Caco-2 (cell line): ENCODE measurements at regions of chr1 and their contacts with region 1.

Region 1: GRCh38 chr1:87805666-87806378 is 477.1 kb downstream of the LMO4 start:
- DNase-seq: peak; percentile 62 to 76
- H3K4me3 ChIP-seq: peak overlapping the region; percentile 34
- H3K4me3 Mint-ChIP-seq: peak overlapping the region; percentile 78
- H3K27ac Mint-ChIP-seq: peak overlapping the region; percentile 95
- H3K4me1 ChIP-seq: peaks cover 38% of the 10 kb centered on the region
- H3K4me1 Mint-ChIP-seq: peaks cover 9% of the 10 kb centered on the region
- H3K27me3 ChIP-seq: no peaks in the 10 kb centered on the region
- H3K27me3 Mint-ChIP-seq: no peaks in the 10 kb centered on the region
- CTCF ChIP-seq: no peak

Region 2: DNA sequence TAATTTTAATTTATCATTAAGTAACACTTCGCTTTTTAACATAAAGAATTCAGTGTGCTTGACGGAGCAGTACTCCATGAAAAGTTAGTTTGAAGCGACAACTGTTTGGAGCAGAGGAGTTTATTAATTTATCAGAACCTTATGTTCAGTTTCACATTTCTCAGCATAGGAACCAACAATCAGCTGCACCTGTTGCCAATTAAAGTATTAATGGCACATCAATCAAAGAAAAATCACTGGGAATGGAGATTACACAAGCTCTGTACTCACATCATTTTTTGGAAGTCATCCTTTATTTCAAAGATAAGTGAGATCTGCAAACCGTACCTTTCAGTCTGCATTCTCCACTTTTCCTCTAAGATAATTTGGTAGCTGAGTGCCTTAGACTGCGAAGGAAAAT is 132.5 kb before region 1 on chr1:
- CTCF ChIA-PET with region 1: no interaction called
- POLR2A ChIA-PET with region 1: no interaction called
- intact Hi-C with region 1: no loop called
- DNase-seq: no peak
- H3K4me3 ChIP-seq: no peak overlapping the region
- H3K4me3 Mint-ChIP-seq: no peak overlapping the region
- H3K27ac Mint-ChIP-seq: no peak overlapping the region
- H3K4me1 ChIP-seq: no peaks in the 10 kb centered on the region
- H3K4me1 Mint-ChIP-seq: no peaks in the 10 kb centered on the region
- H3K27me3 ChIP-seq: no peaks in the 10 kb centered on the region
- H3K27me3 Mint-ChIP-seq: no peaks in the 10 kb centered on the region
- CTCF ChIP-seq: no peak

Region 3: GRCh38 chr1:87718241-87718950 is 87.4 kb before region 1 on chr1:
- CTCF ChIA-PET with region 1: no interaction called
- POLR2A ChIA-PET with region 1: no interaction called
- intact Hi-C with region 1: loop called (anchors 2 kb)
- DNase-seq: peak; percentile 4 to 46
- H3K4me3 ChIP-seq: no peak overlapping the region
- H3K4me3 Mint-ChIP-seq: no peak overlapping the region
- H3K27ac Mint-ChIP-seq: peak overlapping the region; percentile 67
- H3K4me1 ChIP-seq: peaks cover 23% of the 10 kb centered on the region
- H3K4me1 Mint-ChIP-seq: peaks cover 27% of the 10 kb centered on the region
- H3K27me3 ChIP-seq: no peaks in the 10 kb centered on the region
- H3K27me3 Mint-ChIP-seq: no peaks in the 10 kb centered on the region
- CTCF ChIP-seq: no peak

Region 4: GRCh38 chr1:87757676-87758075 is 48.1 kb before region 1 on chr1:
- CTCF ChIA-PET with region 1: no interaction called
- POLR2A ChIA-PET with region 1: no interaction called
- intact Hi-C with region 1: no loop called
- DNase-seq: no peak
- H3K4me3 ChIP-seq: no peak overlapping the region
- H3K4me3 Mint-ChIP-seq: no peak overlapping the region
- H3K27ac Mint-ChIP-seq: no peak overlapping the region
- H3K4me1 ChIP-seq: no peaks in the 10 kb centered on the region
- H3K4me1 Mint-ChIP-seq: peaks cover 13% of the 10 kb centered on the region
- H3K27me3 ChIP-seq: no peaks in the 10 kb centered on the region
- H3K27me3 Mint-ChIP-seq: no peaks in the 10 kb centered on the region
- CTCF ChIP-seq: no peak

Region 5: DNA sequence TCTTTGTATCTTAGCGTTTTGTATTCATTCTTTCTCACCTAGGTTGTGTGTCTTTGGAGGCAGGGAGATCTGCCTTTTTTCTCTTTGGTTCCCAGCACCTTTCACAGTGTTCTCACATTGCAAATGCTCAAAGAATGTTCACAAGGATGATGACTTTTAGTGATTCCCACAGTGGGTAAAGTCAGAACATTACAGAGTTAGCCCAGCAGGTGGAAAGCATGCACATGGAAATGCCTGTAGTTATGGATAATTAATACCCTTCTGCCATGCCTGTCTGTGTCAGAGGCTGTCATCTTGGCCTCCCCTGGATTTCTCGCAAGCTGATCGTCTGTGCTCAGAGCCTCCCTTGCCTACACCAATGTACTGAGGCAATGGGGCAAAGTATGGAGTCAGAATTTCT is 18.3 kb before region 1 on chr1:
- CTCF ChIA-PET with region 1: no interaction called
- POLR2A ChIA-PET with region 1: no interaction called
- intact Hi-C with region 1: loop called (anchors 1 kb)
- DNase-seq: peak; percentile 60 to 66
- H3K4me3 ChIP-seq: no peak overlapping the region
- H3K4me3 Mint-ChIP-seq: peak overlapping the region; percentile 58
- H3K27ac Mint-ChIP-seq: peak overlapping the region; percentile 85
- H3K4me1 ChIP-seq: peaks cover 60% of the 10 kb centered on the region
- H3K4me1 Mint-ChIP-seq: peaks cover 47% of the 10 kb centered on the region
- H3K27me3 ChIP-seq: no peaks in the 10 kb centered on the region
- H3K27me3 Mint-ChIP-seq: no peaks in the 10 kb centered on the region
- CTCF ChIP-seq: peak in 1 of 2 experiments; percentile 15

Region 6: GRCh38 chr1:87794788-87795614 is 10.8 kb before region 1 on chr1:
- CTCF ChIA-PET with region 1: interaction called, 4 read pairs
- POLR2A ChIA-PET with region 1: interaction called, 4 read pairs
- intact Hi-C with region 1: loop called (anchors 1 kb)
- DNase-seq: peak; percentile 22 to 35
- H3K4me3 ChIP-seq: no peak overlapping the region
- H3K4me3 Mint-ChIP-seq: no peak overlapping the region
- H3K27ac Mint-ChIP-seq: peak overlapping the region; percentile 77
- H3K4me1 ChIP-seq: peaks cover 76% of the 10 kb centered on the region
- H3K4me1 Mint-ChIP-seq: peaks cover 51% of the 10 kb centered on the region
- H3K27me3 ChIP-seq: no peaks in the 10 kb centered on the region
- H3K27me3 Mint-ChIP-seq: no peaks in the 10 kb centered on the region
- CTCF ChIP-seq: no peak

Region 7: GRCh38 chr1:87888446-87888845 is 82.6 kb after region 1 on chr1:
- CTCF ChIA-PET with region 1: no interaction called
- POLR2A ChIA-PET with region 1: no interaction called
- intact Hi-C with region 1: loop called (anchors 1 kb)
- DNase-seq: peak in 1 of 2 experiments; percentile 47
- H3K4me3 ChIP-seq: no peak overlapping the region
- H3K4me3 Mint-ChIP-seq: no peak overlapping the region
- H3K27ac Mint-ChIP-seq: peak overlapping the region; percentile 85
- H3K4me1 ChIP-seq: peaks cover 45% of the 10 kb centered on the region
- H3K4me1 Mint-ChIP-seq: peaks cover 25% of the 10 kb centered on the region
- H3K27me3 ChIP-seq: no peaks in the 10 kb centered on the region
- H3K27me3 Mint-ChIP-seq: no peaks in the 10 kb centered on the region
- CTCF ChIP-seq: no peak

Region 8: GRCh38 chr1:87902830-87903229 is 97.0 kb after region 1 on chr1:
- CTCF ChIA-PET with region 1: no interaction called
- POLR2A ChIA-PET with region 1: no interaction called
- intact Hi-C with region 1: loop called (anchors 5 kb)
- DNase-seq: peak; percentile 20 to 53
- H3K4me3 ChIP-seq: no peak overlapping the region
- H3K4me3 Mint-ChIP-seq: no peak overlapping the region
- H3K27ac Mint-ChIP-seq: peak overlapping the region; percentile 56
- H3K4me1 ChIP-seq: peaks cover 36% of the 10 kb centered on the region
- H3K4me1 Mint-ChIP-seq: peaks cover 16% of the 10 kb centered on the region
- H3K27me3 ChIP-seq: no peaks in the 10 kb centered on the region
- H3K27me3 Mint-ChIP-seq: no peaks in the 10 kb centered on the region
- CTCF ChIP-seq: no peak